GM23248 (cell line): ENCODE measurements at regions of chr9 and their contacts with region 1.

Region 1: GRCh38 chr9:96875461-96876364 is 21.4 kb upstream of the ZNF782 start:
- DNase-seq: peak; percentile 50
- H3K4me3 ChIP-seq: peak overlapping the region; percentile 68
- H3K27ac ChIP-seq: no peak overlapping the region
- H3K4me1 ChIP-seq: peaks cover 6% of the 10 kb centered on the region; the same call in 1 of the 2 replicates
- H3K27me3 ChIP-seq: peaks cover 28% of the 10 kb centered on the region

Region 2: DNA sequence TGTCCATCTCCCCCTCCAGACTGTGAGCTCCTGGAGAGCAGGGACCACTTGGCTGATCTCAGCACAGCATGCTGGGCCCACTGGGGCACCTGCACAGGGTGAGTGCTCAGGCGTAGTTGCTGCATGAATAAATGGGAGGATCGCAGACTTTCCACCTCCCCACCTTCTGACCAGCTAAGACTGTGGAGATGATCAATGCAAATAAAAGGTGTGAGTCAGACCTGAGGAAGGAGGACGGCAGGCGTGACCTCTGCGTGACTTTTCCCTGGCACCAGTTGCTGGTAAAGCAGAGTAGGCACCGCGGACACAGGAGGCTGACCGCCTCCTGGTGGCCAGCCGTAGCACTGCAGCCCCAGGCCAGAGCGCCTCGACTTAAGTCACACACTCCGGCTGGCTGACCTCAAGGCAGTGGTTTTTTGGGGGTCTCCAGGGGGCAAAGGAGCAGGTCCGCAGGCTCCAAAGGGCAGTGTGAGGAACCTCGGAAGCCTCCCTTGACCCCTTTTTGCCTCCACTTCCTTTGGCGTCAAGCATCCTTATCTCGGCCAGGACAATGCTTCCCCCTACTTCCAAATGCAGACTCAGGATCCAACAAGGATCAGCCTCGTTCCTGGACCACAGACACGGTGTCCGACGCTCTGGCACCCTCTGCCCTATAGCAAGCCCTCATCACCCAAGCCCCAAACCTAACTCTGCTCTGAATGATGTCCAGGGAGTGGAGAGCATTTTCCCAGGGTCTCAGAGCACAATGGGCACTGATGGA is 523.5 kb after region 1 on chr9:
- in situ Hi-C with region 1: loop called (anchors 10 kb)
- DNase-seq: peak; percentile 87
- H3K4me3 ChIP-seq: no peak overlapping the region
- H3K27ac ChIP-seq: no peak overlapping the region
- H3K4me1 ChIP-seq: peaks cover 3% of the 10 kb centered on the region; the same call in 1 of the 2 replicates
- H3K27me3 ChIP-seq: 0 out of 2 replicates have a peak, but pooled peaks cover 4% of the 10 kb centered on the region